Aorta (tissue), 5 donors: ENCODE measurements at regions of chr3 and their contacts with region 1.

Region 1: DNA sequence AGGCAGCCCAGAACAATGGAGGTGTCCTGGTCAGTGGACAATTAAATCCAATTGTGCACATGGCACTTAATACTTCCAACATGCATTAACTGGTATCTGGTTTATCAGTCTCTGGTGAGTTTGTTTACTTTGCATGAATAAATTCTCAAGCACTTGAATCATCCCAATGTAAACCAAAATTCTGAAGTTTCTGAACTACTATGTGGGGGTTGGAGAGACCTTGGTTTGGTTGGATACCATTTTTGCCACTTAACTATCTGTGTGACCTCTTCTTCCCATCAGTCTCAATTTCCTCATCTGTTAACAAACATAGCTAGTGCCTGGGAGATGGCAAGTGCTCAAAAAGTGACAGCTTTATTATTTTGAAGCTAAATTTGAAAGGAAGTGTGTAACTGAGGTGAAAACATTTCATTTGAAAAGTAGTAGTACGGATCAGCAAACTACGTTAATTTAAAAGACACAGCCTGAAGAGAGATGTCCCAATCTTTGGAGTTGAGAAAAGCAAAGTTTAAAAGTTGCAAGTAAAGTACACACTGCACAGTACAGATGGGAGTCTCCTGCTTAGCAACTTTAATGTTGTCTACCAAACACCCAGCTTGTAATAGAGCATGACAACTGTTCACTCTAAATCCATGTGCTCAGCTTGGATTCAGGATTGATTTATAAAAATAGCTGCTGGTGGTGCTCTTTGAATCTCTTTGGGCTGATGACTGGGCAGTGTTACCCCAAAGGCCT is 70.7 kb upstream of the MAP4 start:
- DNase-seq: no peak
- ATAC-seq: no peak
- H3K4me3 ChIP-seq: peak overlapping the region; percentile 12 to 98
- H3K27ac ChIP-seq: peak overlapping the region; percentile 7 to 42
- H3K4me1 ChIP-seq: peaks cover 3 to 6% of the 10 kb centered on the region in 2 donors
- H3K27me3 ChIP-seq: no peaks in the 10 kb centered on the region

Region 2: DNA sequence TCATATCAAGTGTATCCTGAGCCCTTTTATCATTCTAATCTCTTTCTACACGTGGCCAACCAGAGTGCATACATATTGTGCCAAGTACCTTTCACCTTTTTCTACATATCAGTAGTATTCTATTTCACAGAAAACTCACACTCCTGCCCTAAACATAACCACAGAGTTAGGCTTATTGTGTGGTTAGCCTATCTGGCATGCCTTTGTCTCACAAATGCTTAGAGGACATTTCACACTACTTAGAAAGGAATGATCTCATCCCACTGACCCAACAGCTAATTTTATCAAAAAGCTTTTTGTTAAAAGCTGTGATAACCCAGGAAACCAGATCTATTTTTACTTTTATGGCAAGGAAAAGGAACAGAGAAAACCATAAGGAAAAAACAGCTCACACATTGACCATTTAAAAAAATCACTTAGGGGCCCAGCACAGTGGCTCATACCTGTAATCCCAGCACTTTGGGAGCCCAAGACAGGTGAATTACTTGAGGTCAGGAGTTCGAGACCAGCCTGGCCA is 52.8 kb before region 1 on chr3:
- intact Hi-C with region 1: loop called in 1 of 2 experiments (anchors 1 kb)
- DNase-seq: no peak
- ATAC-seq: peak; percentile 84
- H3K4me3 ChIP-seq: no peak overlapping the region
- H3K27ac ChIP-seq: peak overlapping the region; percentile 61 to 89
- H3K4me1 ChIP-seq: peaks cover 2 to 4% of the 10 kb centered on the region in 2 donors
- H3K27me3 ChIP-seq: no peaks in the 10 kb centered on the region

Region 3: GRCh38 chr3:48151058-48151806 is 64.3 kb after region 1 on chr3:
- intact Hi-C with region 1: loop called in 1 of 2 experiments (anchors 2 kb)
- DNase-seq: peak; percentile 79 to 91
- ATAC-seq: peak; percentile 94
- H3K4me3 ChIP-seq: no peak overlapping the region
- H3K27ac ChIP-seq: peak overlapping the region in 1 of 2 donors; percentile 66
- H3K4me1 ChIP-seq: peaks cover 0 to 1% of the 10 kb centered on the region in 2 donors
- H3K27me3 ChIP-seq: no peaks in the 10 kb centered on the region